ENCODE measurements at regions of chr17 and their contacts with region 1.

Region 1: GRCh38 chr17:74639704-74640151 is 16.2 kb upstream of the CD300E start:
- DNase-seq: no peak
- H3K4me3 ChIP-seq: no peak overlapping the region
- H3K27ac ChIP-seq: no peak overlapping the region
- H3K4me1 ChIP-seq: no peaks in the 10 kb centered on the region
- H3K27me3 ChIP-seq: no peaks in the 10 kb centered on the region
- CTCF ChIP-seq: no peak
- POLR2A ChIP-seq: no peak

Region 2: DNA sequence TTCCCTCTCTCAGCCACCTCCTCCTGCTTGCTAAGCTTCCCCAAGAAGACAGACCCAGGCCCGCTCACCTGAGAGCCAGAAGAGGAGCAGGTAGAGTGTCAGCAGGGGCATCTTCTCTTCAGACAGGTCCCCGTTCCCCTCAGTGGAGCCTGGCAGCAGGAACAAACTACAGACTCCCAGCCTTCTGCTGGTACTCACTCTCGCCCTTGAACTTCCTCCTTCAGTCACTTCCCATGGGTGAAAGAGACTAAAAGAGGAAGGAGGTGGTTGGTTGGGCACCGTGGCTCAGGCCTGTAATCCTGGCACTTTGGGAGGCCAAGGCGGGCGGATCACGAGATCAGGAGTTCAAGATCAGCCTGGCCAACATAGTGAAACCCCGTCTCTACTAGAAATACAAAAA is 73.0 kb after region 1 on chr17 and contains the start of gene CD300LF:
- intact Hi-C with region 1: loop called (anchors 2 kb)
- DNase-seq: no peak
- H3K4me3 ChIP-seq: no peak within 1 kb of the TSS
- H3K27ac ChIP-seq: no peak within 1 kb of the TSS
- H3K4me1 ChIP-seq: no peaks in the 10 kb centered on the region
- H3K27me3 ChIP-seq: no peaks in the 10 kb centered on the region
- CTCF ChIP-seq: no peak
- POLR2A ChIP-seq: no peak
- total RNA-seq, gene CD300LF: 0.49 TPM